GM12878 (cell line): ENCODE measurements at regions of chr2 and their contacts with region 1.

Region 1: GRCh38 chr2:134454931-134455330 is 201.1 kb downstream of the MGAT5 start:
- DNase-seq: no peak
- ATAC-seq: no peak
- H3K4me3 ChIP-seq: no peak overlapping the region
- H3K27ac ChIP-seq: no peak overlapping the region
- H3K4me1 ChIP-seq: no peaks in the 10 kb centered on the region
- H3K27me3 ChIP-seq: no peaks in the 10 kb centered on the region
- CTCF ChIP-seq: no peak
- EP300 ChIP-seq: no peak
- POLR2A ChIP-seq: 0 out of 2 replicates have a peak, but pooled peaks have one; percentile 14
- RAD21 ChIP-seq: no peak

Region 2: GRCh38 chr2:133886735-133887660 is 567.9 kb before region 1 on chr2:
- CTCF ChIA-PET with region 1: interaction called, 32 read pairs
- POLR2A ChIA-PET with region 1: no interaction called
- RAD21 ChIA-PET with region 1: interaction called, 4 read pairs
- SMC1A ChIA-PET with region 1: interaction called, 3 read pairs
- in situ Hi-C with region 1: no loop called
- intact Hi-C with region 1: loop called (anchors 2 kb)
- DNase-seq: peak; percentile 21
- ATAC-seq: peak; percentile 94
- H3K4me3 ChIP-seq: no peak overlapping the region
- H3K27ac ChIP-seq: no peak overlapping the region
- H3K4me1 ChIP-seq: no peaks in the 10 kb centered on the region
- H3K27me3 ChIP-seq: no peaks in the 10 kb centered on the region; a peak in 2 of 4 replicates
- CTCF ChIP-seq: peak; percentile 57 to 76 (median 70); a peak in 5 of 6 replicates
- EP300 ChIP-seq: no peak
- POLR2A ChIP-seq: no peak
- RAD21 ChIP-seq: peak; percentile 84

Region 3: GRCh38 chr2:134436706-134437105 is 18.2 kb before region 1 on chr2:
- CTCF ChIA-PET with region 1: interaction called, 27 read pairs
- POLR2A ChIA-PET with region 1: no interaction called
- RAD21 ChIA-PET with region 1: no interaction called
- SMC1A ChIA-PET with region 1: interaction called, 3 read pairs
- in situ Hi-C with region 1: no loop called
- intact Hi-C with region 1: no loop called
- DNase-seq: no peak
- ATAC-seq: no peak
- H3K4me3 ChIP-seq: no peak overlapping the region
- H3K27ac ChIP-seq: no peak overlapping the region
- H3K4me1 ChIP-seq: no peaks in the 10 kb centered on the region
- H3K27me3 ChIP-seq: no peaks in the 10 kb centered on the region
- CTCF ChIP-seq: no peak
- EP300 ChIP-seq: no peak
- POLR2A ChIP-seq: no peak
- RAD21 ChIP-seq: no peak

Region 4: DNA sequence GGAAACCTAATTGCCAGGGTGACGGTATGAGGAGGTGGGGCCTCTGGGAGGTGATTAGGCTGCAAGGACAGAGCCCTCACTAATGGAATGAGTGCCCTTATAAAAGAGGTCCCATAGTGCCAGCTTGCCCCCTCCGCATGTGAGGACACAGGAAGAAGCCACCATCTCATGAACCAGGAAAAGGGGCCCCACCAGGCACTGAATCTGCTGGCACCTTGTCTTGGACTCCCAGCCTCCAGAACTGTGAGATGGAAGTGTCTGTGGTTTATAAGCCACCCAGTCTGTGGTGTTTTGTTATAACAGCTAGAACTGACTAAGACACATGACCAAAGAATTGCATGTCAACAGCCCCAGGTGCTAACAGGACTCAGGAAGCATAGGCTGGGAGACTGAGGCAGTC is 13.2 kb after region 1 on chr2:
- CTCF ChIA-PET with region 1: interaction called, 16 read pairs
- POLR2A ChIA-PET with region 1: no interaction called
- RAD21 ChIA-PET with region 1: no interaction called
- SMC1A ChIA-PET with region 1: no interaction called
- in situ Hi-C with region 1: no loop called
- intact Hi-C with region 1: no loop called
- DNase-seq: no peak
- ATAC-seq: no peak
- H3K4me3 ChIP-seq: no peak overlapping the region
- H3K27ac ChIP-seq: no peak overlapping the region
- H3K4me1 ChIP-seq: no peaks in the 10 kb centered on the region
- H3K27me3 ChIP-seq: no peaks in the 10 kb centered on the region
- CTCF ChIP-seq: no peak
- EP300 ChIP-seq: no peak
- POLR2A ChIP-seq: no peak
- RAD21 ChIP-seq: no peak

Region 5: DNA sequence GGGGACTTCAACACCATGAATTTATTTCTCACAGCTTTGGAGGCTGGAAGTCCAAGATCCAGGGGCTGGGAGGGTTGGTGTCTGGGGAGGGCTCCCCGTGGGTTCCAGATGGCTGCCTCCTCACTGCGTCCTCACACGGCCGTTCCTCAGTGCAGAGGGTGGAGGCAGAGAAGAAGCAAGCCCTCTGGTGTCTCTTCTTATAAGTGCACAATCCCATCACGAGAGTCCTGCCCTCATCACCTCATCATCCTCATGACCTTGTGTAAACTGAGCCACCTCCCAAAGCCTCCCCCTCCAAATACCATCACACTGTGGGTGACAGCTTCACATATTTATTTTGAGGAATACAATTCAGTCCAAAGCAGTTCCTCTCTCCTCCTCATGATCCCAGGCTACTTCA is 237.6 kb after region 1 on chr2:
- CTCF ChIA-PET with region 1: interaction called, 3 read pairs
- POLR2A ChIA-PET with region 1: no interaction called
- RAD21 ChIA-PET with region 1: no interaction called
- SMC1A ChIA-PET with region 1: no interaction called
- in situ Hi-C with region 1: no loop called
- intact Hi-C with region 1: loop called (anchors 5 kb)
- DNase-seq: no peak
- ATAC-seq: peak; percentile 75
- H3K4me3 ChIP-seq: no peak overlapping the region
- H3K27ac ChIP-seq: no peak overlapping the region
- H3K4me1 ChIP-seq: no peaks in the 10 kb centered on the region
- H3K27me3 ChIP-seq: no peaks in the 10 kb centered on the region
- CTCF ChIP-seq: peak in 2 of 3 experiments; percentile 31 to 36; a peak in 3 of 6 replicates
- EP300 ChIP-seq: no peak
- POLR2A ChIP-seq: no peak
- RAD21 ChIP-seq: peak; percentile 53